ENCODE measurements at regions of chr7 and their contacts with region 1.

Region 1: DNA sequence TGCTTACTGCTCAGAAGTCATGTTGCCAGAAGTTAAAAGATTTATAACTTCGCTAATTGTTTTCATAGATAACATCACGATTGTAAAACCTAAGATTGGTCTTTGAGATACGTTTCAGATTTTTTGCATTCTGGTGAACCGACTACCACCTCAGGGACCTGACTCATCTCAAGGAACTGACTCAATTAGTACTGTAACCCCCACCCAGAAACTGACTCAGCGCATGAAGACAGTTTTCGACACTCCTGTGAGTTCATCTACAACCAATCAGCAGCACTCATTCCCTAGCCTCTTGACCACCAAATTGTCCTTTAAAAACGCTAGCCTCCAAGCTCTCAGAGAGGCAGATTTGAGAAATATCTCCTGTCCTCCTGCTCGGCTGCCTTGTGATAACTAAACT is 72.3 kb downstream of the ELMO1 start:
- DNase-seq: peak; percentile 80
- H3K4me3 Mint-ChIP-seq: peak overlapping the region; percentile 54
- H3K27ac Mint-ChIP-seq: peak overlapping the region; percentile 95
- H3K4me1 Mint-ChIP-seq: peaks cover 72% of the 10 kb centered on the region
- H3K27me3 Mint-ChIP-seq: no peaks in the 10 kb centered on the region

Region 2: DNA sequence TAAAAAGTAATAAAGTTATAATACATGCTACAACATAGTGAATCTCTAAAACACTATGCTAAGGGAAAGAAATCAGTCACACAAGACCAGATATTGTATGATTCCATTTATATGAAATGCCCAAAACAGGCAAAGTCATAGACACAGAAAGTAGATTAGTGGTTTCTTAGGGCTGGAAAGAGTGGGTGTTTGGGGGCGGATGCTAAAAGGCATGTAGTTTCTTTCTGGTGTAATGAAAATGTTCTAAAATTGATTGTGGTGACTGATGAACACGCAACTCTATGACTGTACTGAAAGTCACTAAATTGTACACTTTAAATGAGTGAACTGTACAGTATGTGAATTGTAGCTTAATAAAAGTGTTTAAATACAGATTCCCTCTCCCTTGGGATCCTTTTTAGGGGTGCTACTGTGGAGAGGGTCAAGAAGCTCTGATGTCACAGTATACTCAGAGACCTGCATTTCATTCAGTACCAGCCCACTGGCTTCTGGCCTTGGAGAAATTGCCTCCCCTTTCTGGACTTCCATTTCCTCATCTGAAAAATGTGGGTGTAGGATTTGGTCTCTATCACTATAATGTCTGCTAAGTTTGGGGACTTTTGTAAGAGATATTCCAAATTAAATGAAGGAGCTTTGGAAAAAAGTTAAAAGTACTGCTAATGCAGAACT is 698.5 kb before region 1 on chr7:
- CTCF ChIA-PET with region 1: no interaction called
- POLR2A ChIA-PET with region 1: no interaction called
- intact Hi-C with region 1: no loop called
- DNase-seq: peak; percentile 85
- H3K4me3 Mint-ChIP-seq: peak overlapping the region; percentile 24
- H3K27ac Mint-ChIP-seq: peak overlapping the region; percentile 74
- H3K4me1 Mint-ChIP-seq: peaks cover 39% of the 10 kb centered on the region
- H3K27me3 Mint-ChIP-seq: no peaks in the 10 kb centered on the region

Region 3: DNA sequence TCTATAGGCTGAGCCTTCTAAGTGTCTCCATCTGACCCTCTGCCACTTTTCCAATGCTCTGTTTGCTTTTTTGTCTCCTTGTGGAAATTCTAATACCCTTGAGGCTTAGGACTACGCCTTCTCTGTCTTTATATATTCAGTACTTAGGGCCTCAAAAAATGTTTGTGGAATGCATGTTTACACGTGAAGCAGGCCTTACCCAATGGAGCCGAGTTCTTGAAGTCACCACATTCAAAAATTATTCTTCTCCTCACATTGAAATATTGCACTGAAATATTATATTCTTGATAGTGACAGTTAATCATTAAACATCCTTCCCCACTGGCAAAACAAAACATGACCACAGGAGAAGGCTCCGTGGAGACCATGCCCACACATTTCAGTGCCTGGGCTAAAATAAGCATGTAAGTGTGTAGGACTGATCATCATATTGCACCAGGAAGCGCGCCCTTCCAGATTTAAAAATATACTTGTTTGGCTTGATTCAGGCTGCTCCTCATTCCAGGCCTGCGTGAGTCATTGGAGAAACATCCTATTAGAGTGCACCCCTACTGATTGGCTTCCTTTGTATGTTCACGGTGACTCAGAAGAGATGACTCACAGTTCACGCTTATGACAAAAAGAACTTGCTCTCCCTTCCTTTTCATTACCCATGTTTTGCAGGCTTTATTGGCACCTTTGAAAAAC is 344.7 kb before region 1 on chr7:
- CTCF ChIA-PET with region 1: no interaction called
- POLR2A ChIA-PET with region 1: no interaction called
- intact Hi-C with region 1: no loop called
- DNase-seq: peak; percentile 68
- H3K4me3 Mint-ChIP-seq: no peak overlapping the region
- H3K27ac Mint-ChIP-seq: peak overlapping the region; percentile 49
- H3K4me1 Mint-ChIP-seq: peaks cover 57% of the 10 kb centered on the region
- H3K27me3 Mint-ChIP-seq: no peaks in the 10 kb centered on the region

Region 4: GRCh38 chr7:37275078-37275710 is 101.2 kb before region 1 on chr7:
- CTCF ChIA-PET with region 1: no interaction called
- POLR2A ChIA-PET with region 1: no interaction called
- intact Hi-C with region 1: no loop called
- DNase-seq: no peak
- H3K4me3 Mint-ChIP-seq: no peak overlapping the region
- H3K27ac Mint-ChIP-seq: no peak overlapping the region
- H3K4me1 Mint-ChIP-seq: peaks cover 33% of the 10 kb centered on the region
- H3K27me3 Mint-ChIP-seq: no peaks in the 10 kb centered on the region

Region 5: DNA sequence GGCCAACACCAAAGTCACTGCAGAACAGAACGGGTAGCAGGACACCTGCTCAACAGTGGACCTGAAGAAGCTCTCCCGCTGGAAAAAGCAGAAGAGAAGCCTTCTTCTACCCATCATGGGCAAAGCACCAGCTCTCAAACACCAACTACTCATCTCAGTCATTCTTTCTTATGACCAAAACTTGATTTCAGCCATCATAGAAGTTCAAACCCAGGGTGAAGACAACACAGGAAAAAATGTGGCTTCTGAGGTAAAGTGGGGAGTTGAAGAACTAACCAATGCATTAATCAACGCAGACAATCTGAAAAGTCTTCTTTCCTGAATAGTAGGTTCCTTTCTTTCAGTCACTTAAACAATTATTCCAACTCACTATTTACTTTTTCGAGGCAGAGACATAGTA is 11.0 kb before region 1 on chr7:
- CTCF ChIA-PET with region 1: interaction called, 6 read pairs
- POLR2A ChIA-PET with region 1: interaction called, 7 read pairs
- intact Hi-C with region 1: loop called (anchors 1 kb)
- DNase-seq: no peak
- H3K4me3 Mint-ChIP-seq: no peak overlapping the region
- H3K27ac Mint-ChIP-seq: peak overlapping the region; percentile 98
- H3K4me1 Mint-ChIP-seq: peaks cover 86% of the 10 kb centered on the region
- H3K27me3 Mint-ChIP-seq: no peaks in the 10 kb centered on the region

Region 6: GRCh38 chr7:37395618-37396259 is 19.4 kb after region 1 on chr7:
- CTCF ChIA-PET with region 1: no interaction called
- POLR2A ChIA-PET with region 1: interaction called, 3 read pairs
- intact Hi-C with region 1: loop called (anchors 1 kb)
- DNase-seq: no peak
- H3K4me3 Mint-ChIP-seq: no peak overlapping the region
- H3K27ac Mint-ChIP-seq: peak overlapping the region; percentile 85
- H3K4me1 Mint-ChIP-seq: peaks cover 78% of the 10 kb centered on the region
- H3K27me3 Mint-ChIP-seq: no peaks in the 10 kb centered on the region

Region 7: DNA sequence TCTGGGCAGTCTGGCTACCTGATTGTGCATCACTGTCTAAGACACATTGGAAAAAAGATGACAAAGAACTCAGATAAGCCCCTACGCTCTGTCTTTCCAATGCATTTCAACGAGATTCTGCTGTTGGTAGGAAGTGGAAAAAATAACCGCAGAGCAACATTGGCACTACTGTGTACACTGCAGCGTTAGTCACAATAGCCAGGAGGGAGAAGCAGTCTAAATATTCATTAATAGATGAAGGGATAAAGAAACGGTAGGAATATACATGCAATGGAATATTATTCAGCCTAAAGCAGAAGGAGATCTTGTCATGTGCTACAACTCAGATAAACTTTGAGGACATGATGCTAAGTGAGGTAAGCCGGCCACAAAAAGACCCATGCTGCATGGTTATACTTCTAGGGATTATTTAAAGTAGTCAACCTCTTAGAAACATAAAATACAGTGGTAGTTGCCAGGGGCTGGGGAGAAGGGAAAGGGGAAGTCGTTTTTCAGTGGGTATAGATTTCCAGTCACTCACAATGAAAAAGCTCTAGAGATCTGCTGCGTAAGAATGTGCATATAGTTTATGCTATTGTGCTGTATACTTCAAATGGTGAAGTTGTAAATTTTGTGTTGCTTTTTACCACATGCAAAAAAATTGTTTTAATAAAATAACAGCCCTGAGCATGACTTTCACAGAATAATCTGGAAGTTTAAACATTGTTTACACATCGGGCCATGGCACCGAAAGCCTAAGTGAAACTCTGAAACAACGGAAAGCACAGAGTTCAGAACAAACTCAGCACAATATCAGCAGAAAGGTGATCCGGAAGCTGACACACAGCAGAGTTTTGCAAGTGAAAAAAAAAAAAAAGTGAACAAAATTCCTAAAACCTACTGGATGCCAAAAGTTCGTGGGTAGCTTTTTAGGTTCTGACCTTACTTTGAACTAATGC is 32.2 kb after region 1 on chr7:
- CTCF ChIA-PET with region 1: no interaction called
- POLR2A ChIA-PET with region 1: no interaction called
- intact Hi-C with region 1: loop called (anchors 1 kb)
- DNase-seq: peak; percentile 34
- H3K4me3 Mint-ChIP-seq: peak overlapping the region; percentile 70
- H3K27ac Mint-ChIP-seq: peak overlapping the region; percentile 96
- H3K4me1 Mint-ChIP-seq: peaks cover 86% of the 10 kb centered on the region
- H3K27me3 Mint-ChIP-seq: no peaks in the 10 kb centered on the region